Breast epithelium (tissue), 4 donors: ENCODE measurements at regions of chr19 and their contacts with region 1.

Region 1: GRCh38 chr19:16247353-16248182 is 49.9 kb downstream of the AP1M1 start:
- DNase-seq: peak; percentile 73 to 85
- H3K4me3 ChIP-seq: no peak overlapping the region
- H3K27ac ChIP-seq: no peak overlapping the region
- H3K4me1 ChIP-seq: no peaks in the 10 kb centered on the region
- H3K27me3 ChIP-seq: no peaks in the 10 kb centered on the region
- CTCF ChIP-seq: peak; percentile 92 to 98 (median 94)
- POLR2A ChIP-seq: no peak

Region 2: DNA sequence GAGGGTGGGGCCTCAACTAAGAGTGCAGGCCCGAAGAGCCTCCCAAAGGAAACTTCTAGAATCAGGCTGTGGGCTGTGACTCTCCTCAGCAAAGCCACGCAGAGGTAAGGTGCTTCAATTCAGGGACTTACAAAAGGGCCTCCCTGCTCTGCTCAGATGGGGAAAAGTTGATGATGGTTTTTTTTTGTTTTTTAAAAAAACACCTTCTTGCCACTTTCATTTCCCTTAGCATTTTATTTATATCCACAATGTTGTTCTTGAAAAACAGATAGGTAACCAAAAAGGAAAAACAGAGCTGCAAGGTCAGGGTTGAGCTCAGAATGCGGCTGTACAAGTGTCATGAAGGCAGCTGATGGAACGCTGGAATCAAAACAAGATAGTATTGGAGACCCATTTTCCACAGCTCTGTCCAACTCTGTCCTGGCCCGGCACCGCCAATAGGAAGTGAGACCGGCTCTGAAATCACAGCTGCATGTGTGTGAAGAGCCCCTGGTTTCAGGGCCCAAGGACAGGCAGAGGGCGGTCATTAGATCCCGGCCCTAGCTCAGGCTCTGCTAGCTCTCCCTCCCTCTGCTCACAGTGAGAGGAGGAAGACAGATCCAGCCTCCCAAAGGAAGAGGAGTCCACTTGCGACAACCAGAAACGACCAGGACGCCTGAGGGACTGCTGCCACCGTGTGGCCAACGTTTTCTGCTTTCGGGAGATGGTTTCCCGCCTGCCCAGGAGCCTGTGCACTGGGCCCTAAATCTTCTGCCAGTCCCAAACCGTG is 135.4 kb after region 1 on chr19:
- intact Hi-C with region 1: loop called (anchors 5 kb)
- DNase-seq: peak; percentile 74 to 84
- H3K4me3 ChIP-seq: no peak overlapping the region
- H3K27ac ChIP-seq: peak overlapping the region; percentile 73 to 87
- H3K4me1 ChIP-seq: no peaks in the 10 kb centered on the region
- H3K27me3 ChIP-seq: no peaks in the 10 kb centered on the region
- CTCF ChIP-seq: peak; percentile 60 to 85 (median 81)
- POLR2A ChIP-seq: no peak